HEK293T (cell line): ENCODE measurements at regions of chr1 and their contacts with region 1.

Region 1: DNA sequence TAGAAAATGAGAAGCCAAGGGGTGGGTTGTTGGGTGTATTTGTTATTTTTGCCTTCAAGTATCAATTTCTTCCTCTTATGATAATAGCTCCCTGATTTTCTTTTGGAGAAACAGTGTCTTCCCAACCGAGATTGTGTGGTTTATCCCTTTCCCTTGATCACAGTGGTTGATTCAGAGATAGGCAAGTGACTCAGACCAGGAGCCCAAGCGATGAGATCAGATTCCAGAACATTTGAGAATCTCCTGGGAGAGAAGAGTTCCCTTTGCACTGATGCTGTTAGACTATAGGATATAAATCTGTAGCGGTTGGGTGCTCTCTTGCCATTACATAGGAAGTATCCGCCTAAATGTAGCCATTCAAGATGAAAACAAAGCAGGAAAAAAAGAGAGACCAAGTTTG is 90.1 kb upstream of the WDR26 start:
- DNase-seq: no peak

Region 2: DNA sequence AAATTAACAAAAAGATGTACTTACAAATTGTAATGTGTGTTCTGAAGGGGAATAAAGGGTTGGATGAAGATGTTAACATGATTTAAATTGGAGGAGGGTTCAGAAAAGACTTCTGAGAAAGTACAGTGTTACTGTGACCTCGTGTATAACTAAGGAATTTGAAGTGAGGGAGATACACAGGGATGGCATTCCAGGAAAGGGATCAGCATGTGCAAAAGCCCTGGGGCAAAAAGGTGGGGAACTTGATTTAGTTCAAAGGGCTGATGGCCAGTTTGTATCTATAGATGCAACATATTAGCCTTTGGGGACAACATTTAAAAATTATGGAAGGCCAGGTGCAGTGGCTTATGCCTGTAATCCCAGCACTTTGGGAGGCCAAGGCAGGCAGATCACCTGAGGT is 375.0 kb before region 1 on chr1:
- CTCF ChIA-PET with region 1: no interaction called
- POLR2A ChIA-PET with region 1: no interaction called
- DNase-seq: no peak

Region 3: DNA sequence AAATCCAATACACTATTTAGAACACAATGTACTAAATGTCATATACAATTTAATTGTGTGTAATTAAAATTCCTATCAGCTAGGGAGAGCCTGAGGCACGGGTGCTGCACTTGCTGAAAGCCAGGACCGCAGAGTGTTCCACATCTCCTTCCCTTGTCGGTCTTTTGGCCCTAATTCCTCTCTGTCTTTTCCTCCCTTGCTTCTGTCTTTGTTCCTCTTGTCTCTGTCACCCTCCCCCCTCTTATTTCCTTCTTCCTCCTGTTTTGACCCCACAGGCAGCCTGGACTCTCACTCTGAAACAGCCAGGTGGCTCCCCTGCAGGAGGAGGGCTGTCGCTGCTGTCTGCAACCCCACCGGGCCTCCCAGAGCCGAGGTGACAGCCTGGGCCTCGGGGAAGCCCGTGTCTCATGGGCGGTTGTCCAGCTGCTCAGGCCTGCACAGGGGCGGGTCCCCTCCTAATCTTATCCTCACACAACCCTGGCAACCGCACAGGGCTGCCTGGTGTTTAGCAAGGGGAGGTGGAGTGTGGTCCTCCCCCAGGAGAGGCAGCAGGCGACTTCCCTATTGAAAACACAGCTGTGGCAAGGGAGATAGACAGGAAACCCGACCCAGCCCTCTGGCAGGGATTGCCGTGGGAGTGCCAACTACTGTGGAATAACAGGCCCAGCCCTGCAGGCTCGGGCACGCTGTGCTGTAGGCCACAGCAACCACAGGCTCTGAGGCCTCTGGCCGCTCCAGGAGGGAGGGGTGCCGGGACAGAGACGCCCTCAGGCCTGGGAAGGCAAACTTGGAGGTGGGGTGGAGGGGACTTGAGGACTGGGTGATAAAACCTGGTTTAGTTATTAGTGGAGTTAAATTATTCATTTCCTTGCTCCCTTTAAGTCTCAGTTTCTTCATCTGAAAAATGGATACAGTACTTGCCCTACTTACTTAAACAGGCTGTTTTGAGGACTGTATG is 21.2 kb before region 1 on chr1:
- CTCF ChIA-PET with region 1: no interaction called
- POLR2A ChIA-PET with region 1: no interaction called
- DNase-seq: peak; percentile 79

Region 4: DNA sequence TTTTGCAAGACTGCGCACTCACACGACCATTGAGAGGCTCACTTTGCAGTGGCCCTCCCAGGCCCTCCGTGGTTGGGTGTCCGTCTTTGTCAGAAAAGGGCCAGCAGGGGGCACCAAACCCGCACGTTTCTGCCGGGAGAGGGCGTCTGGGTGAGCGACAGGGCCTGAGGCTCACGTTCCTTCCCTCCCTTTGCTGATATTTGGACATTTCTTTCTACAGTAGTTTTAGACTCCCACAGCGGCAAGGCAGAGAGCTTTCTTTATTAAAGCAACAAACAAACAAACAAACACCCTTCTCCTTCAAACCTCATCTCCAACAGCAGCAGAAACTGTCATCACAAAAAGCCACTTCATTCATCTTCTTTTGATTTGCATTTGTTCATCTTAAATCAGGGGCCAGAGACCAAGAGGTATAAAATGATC is 10.9 kb before region 1 on chr1:
- CTCF ChIA-PET with region 1: interaction called, 15 read pairs
- POLR2A ChIA-PET with region 1: no interaction called
- DNase-seq: peak; percentile 95

Region 5: DNA sequence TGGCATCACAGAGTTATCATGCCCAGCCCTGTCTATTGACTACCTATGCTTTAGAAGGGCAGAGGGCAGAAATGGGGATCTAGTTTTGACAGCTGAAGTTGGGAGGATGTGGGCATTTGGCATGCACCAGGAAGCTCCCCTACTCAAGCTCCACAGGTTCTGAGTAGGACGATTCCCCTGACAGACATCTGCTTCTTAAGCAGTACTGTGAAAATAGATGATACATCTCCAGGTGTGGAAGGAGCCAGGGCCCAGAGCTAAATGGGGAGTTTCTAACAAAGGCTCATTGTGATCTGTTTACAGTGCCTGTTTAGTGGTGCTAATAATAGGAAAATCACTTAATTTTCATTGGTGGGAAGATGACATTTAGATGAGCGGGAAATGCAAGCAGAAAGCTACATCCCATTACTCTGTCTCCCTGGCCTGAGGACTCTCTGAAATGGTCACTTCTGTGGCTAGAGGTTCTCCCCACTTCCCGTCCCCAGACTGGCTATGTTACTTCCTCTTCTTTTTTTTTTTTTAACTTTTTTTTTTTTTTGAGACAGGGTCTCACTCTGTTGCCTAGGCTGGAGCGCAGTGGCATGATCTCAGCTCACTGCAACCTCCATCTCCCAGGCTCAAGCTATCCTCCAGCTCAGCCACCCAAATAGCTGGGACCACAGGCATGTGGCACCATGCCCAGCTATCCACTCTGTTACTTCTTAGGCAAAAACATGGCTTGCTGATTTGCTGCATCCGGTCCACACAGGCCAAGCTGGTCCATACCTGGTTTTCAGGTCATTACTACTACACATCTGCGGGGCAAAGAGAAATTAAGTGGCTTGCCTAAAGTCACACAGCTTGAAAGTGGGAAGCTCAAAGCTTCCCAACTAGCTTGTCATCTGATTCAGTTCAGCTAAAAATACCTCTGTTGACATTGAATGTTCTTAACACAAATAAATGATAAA is 68.2 kb after region 1 on chr1:
- CTCF ChIA-PET with region 1: interaction called, 10 read pairs
- POLR2A ChIA-PET with region 1: no interaction called
- DNase-seq: no peak

Region 6: GRCh38 chr1:224644553-224645154 is 120.0 kb after region 1 on chr1:
- CTCF ChIA-PET with region 1: no interaction called
- POLR2A ChIA-PET with region 1: no interaction called
- DNase-seq: peak; percentile 83